GM13976 (cell line): ENCODE measurements at regions of chr1 and their contacts with region 1.

Region 1: DNA sequence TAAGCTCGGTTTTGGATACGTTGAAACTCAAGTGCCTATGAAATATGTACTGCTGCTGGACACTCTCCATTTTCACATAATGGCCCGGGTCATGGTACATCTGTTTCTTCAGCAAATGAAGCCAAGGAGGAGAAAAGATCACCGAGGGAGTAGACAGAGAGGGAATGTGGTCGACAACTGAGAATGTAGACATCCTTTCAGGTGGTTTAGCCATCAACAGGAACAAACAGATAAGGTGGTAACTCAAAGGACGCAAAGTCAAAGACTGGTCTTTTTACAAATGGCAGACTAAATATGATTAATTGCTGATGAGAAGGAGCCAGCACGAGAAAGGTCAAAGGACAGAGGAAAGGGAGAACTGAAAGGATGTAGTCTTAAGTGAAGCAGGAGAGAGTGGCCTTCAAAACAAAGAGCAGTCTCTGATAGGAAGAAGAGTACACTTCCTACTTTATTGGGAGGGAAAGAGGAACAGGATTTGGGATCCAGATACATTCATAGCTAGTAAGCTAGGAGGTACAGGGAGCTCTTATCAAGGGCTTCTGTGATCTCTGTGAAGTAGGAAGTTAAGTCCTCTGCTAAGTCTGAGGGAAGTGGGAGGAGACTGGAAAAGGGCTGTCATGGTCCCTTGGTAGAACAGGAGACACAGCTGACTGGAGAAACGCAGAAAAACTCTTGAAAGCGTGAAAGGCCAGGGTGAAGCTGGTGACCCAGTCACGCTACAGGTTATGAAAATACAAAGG is 28.3 kb downstream of the NUP133 start:
- DNase-seq: peak; percentile 55
- CTCF ChIP-seq: no peak

Region 2: DNA sequence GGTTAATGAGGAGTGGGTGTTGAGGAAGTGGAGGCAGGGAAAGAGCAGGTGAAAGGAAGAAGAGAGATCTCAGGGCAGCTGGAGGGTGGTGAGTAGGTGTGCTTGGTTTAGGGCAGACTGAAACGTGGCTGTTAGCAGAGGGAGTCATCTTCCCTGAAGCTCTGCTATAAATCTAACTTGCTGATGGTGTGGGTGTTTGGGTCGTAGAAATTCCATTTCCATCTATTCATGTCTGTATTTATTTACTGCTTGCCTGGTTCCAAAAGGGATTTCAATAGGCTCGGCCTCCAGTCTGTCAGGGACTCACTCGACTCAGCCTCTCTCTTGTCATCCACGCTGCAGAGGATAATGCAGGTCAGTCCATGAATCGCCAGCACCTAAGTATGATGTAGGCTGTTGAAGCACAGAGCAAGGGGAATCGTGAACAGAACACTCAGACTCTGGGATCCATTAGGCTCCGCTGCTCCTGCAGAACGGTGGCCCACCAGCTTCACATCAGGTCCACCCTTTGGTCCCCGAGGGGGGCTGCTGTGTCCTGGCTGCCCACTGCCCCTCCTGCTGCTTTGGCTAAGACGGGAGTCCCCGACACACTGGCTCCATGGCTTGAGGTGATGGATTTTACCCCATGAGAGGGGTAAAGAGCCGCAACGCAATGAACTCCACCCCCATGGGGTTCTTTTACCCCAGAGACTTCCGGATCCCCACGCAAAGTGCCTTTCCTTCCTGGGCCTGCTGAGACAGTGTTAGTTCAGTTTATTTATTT is 588.4 kb before region 1 on chr1:
- in situ Hi-C with region 1: no loop called
- DNase-seq: no peak
- CTCF ChIP-seq: no peak

Region 3: DNA sequence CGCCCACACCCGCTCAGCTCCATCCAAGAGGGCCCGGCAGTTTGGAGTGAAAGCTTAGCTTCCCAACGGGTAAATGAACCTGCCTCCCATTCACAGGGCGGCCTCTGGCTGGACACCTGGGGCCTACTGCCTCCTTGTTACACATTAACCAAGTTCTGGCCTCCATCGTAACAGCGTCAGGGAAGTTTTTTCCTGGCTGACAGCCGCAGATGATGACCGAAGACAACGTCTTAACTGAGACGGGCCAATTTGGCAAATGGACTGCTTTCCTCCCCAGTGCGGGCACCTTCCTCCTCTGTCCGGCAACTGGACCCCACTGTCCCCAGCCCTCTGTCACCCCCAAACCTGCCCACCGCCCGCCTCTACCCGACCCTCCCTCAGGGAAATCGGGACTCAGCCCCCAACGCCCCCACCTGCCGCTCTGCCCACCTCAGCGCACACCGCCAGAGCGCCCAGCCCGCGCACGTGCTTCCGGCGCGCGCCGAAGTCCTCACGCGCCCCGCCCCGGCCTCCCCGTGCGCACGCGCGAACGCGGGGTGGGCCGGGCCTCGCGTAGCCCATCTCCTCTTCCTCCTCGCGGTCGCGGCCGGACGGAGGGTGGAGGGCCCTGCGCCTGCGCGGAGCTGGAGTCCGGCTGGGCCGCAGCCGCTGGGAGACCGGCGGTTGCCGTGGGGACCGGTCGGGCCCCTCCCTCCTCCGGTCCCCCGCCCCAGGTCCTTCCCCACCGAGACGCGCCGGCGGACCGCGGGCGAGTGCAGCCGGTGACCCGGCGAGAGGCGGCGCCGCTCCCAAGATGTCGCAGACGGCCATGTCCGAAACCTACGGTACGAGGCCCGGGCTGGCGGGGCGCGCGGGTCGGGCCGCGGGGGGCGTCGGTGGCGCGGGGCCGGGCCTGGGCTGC is 209.0 kb before region 1 on chr1 and contains the start of gene RAB4A:
- in situ Hi-C with region 1: loop called (anchors 10 kb)
- DNase-seq: peak; percentile 95
- CTCF ChIP-seq: no peak

Region 4: GRCh38 chr1:229420765-229421164 is 59.1 kb before region 1 on chr1:
- in situ Hi-C with region 1: no loop called
- DNase-seq: no peak
- CTCF ChIP-seq: no peak